GM12878 (cell line): ENCODE measurements at regions of chr1 and their contacts with region 1.

Region 1: DNA sequence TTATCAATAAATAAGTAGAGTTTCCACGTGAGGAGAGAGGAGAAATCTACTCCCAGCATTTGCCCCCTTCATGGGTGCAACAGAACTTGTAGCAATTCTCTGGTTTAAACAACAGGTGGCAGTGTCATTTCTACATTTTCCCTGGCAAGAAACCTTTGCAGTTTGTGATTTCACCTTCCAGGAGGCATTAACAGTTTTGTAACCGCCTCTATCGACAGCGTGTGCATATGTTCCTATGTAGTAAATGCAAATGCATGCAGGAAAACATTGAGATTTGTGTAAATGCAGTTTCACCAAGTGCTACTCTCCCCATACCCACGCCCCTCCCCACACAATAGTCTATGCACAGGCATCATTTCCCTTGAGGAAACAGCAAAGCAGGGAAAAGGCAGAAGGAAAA is 494.7 kb downstream of the SMYD3 start:
- DNase-seq: no peak
- ATAC-seq: peak; percentile 79
- H3K4me3 ChIP-seq: no peak overlapping the region
- H3K27ac ChIP-seq: no peak overlapping the region
- H3K4me1 ChIP-seq: no peaks in the 10 kb centered on the region
- H3K27me3 ChIP-seq: no peaks in the 10 kb centered on the region
- CTCF ChIP-seq: peak; percentile 57 to 64 (median 59); a peak in 5 of 6 replicates
- EP300 ChIP-seq: no peak
- POLR2A ChIP-seq: no peak
- RAD21 ChIP-seq: peak; percentile 79

Region 2: GRCh38 chr1:245978915-245979314 is 33.4 kb before region 1 on chr1:
- CTCF ChIA-PET with region 1: no interaction called
- POLR2A ChIA-PET with region 1: no interaction called
- RAD21 ChIA-PET with region 1: no interaction called
- SMC1A ChIA-PET with region 1: no interaction called
- in situ Hi-C with region 1: no loop called
- intact Hi-C with region 1: no loop called
- DNase-seq: no peak
- ATAC-seq: no peak; the same call in 2 of the 3 replicates
- H3K4me3 ChIP-seq: no peak overlapping the region
- H3K27ac ChIP-seq: no peak overlapping the region
- H3K4me1 ChIP-seq: no peaks in the 10 kb centered on the region
- H3K27me3 ChIP-seq: no peaks in the 10 kb centered on the region
- CTCF ChIP-seq: no peak
- EP300 ChIP-seq: no peak
- POLR2A ChIP-seq: no peak
- RAD21 ChIP-seq: no peak

Region 3: DNA sequence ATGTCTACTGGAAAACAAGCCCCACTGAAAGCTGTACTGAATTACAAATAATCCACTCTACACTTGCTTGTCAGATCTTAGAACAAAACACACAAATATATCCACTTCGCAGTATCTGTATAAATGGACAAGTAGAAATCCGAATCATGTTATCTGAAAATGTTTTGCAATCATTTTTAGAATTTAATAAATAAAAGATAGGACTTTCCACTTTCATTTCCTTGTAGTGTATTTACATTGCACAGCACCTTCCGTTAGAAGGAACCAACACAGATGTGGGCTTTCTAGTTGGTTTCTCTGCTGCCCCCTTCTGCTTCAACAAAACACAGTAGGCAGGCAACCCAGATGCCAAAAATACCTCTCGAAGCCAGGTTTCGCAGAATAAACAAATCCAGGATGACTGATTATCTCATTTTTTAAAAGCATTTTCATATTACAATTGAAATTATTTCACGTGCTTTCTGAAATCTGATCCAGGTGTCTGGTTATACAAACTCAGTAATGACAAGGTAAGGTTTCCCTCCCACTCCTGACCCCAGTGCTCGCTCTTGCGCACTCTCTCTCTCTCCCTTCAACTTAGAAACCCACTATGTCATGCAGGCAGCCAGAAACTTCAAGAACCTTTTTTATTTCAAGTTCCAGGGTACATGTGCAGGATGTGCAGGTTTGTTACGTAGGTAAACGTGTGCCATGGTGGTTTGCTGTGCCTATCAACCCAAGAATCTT is 104.9 kb after region 1 on chr1:
- CTCF ChIA-PET with region 1: interaction called, 5 read pairs
- POLR2A ChIA-PET with region 1: no interaction called
- RAD21 ChIA-PET with region 1: interaction called, 4 read pairs
- SMC1A ChIA-PET with region 1: interaction called, 4 read pairs
- in situ Hi-C with region 1: no loop called
- intact Hi-C with region 1: loop called (anchors 1 kb)
- DNase-seq: peak; percentile 16
- ATAC-seq: peak; percentile 99
- H3K4me3 ChIP-seq: no peak overlapping the region; the same call in 1 of the 2 replicates
- H3K27ac ChIP-seq: no peak overlapping the region
- H3K4me1 ChIP-seq: no peaks in the 10 kb centered on the region
- H3K27me3 ChIP-seq: no peaks in the 10 kb centered on the region
- CTCF ChIP-seq: peak; percentile 43 to 51 (median 49)
- EP300 ChIP-seq: no peak
- POLR2A ChIP-seq: no peak
- RAD21 ChIP-seq: peak; percentile 53

Region 4: GRCh38 chr1:246280551-246280950 is 268.2 kb after region 1 on chr1:
- CTCF ChIA-PET with region 1: interaction called, 28 read pairs
- POLR2A ChIA-PET with region 1: no interaction called
- RAD21 ChIA-PET with region 1: interaction called, 9 read pairs
- SMC1A ChIA-PET with region 1: interaction called, 20 read pairs
- in situ Hi-C with region 1: loop called (anchors 10 kb)
- intact Hi-C with region 1: loop called (anchors 1 kb)
- DNase-seq: no peak
- ATAC-seq: peak; percentile 62
- H3K4me3 ChIP-seq: no peak overlapping the region
- H3K27ac ChIP-seq: no peak overlapping the region
- H3K4me1 ChIP-seq: no peaks in the 10 kb centered on the region
- H3K27me3 ChIP-seq: no peaks in the 10 kb centered on the region
- CTCF ChIP-seq: peak in 1 of 3 experiments; percentile 20; a peak in 1 of 6 replicates
- EP300 ChIP-seq: no peak
- POLR2A ChIP-seq: no peak
- RAD21 ChIP-seq: peak; percentile 61

Region 5: DNA sequence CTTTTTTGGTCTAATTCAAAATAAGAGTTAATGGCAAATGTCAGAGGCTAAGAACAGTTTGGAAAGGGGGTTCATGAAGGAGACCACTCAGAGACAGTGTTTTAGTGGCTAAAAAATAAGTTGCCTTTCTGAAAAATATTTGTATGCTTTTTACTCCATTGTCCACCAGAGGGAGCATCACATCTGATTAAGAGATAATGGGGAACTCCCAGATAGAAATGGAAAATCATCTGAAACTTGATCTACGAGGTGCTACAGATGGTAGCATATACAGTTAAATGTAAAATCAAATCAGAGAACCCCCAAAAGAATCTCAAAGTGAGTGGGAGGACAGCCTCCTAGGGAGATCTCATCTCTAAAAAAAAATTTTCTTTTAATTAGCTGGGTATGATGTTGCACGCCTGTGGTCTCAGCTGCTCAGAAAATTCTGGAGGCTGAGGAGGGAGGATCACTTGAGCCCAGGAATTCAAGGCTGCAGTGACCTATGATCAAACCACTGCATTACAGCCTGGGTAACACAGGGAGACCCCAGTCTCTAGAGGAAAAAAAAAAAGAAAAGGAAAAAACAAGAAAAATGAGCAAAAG is 485.1 kb after region 1 on chr1:
- CTCF ChIA-PET with region 1: interaction called, 7 read pairs
- POLR2A ChIA-PET with region 1: no interaction called
- RAD21 ChIA-PET with region 1: interaction called, 3 read pairs
- SMC1A ChIA-PET with region 1: interaction called, 3 read pairs
- in situ Hi-C with region 1: no loop called
- intact Hi-C with region 1: loop called (anchors 1 kb)
- DNase-seq: no peak
- ATAC-seq: peak; percentile 86
- H3K4me3 ChIP-seq: no peak overlapping the region
- H3K27ac ChIP-seq: no peak overlapping the region
- H3K4me1 ChIP-seq: no peaks in the 10 kb centered on the region; the same call in 1 of the 2 replicates
- H3K27me3 ChIP-seq: no peaks in the 10 kb centered on the region
- CTCF ChIP-seq: peak; percentile 52 to 78 (median 57); a peak in 5 of 6 replicates
- EP300 ChIP-seq: no peak
- POLR2A ChIP-seq: no peak
- RAD21 ChIP-seq: peak; percentile 81